ENCODE measurements at regions of chr11 and their contacts with region 1.

Region 1: DNA sequence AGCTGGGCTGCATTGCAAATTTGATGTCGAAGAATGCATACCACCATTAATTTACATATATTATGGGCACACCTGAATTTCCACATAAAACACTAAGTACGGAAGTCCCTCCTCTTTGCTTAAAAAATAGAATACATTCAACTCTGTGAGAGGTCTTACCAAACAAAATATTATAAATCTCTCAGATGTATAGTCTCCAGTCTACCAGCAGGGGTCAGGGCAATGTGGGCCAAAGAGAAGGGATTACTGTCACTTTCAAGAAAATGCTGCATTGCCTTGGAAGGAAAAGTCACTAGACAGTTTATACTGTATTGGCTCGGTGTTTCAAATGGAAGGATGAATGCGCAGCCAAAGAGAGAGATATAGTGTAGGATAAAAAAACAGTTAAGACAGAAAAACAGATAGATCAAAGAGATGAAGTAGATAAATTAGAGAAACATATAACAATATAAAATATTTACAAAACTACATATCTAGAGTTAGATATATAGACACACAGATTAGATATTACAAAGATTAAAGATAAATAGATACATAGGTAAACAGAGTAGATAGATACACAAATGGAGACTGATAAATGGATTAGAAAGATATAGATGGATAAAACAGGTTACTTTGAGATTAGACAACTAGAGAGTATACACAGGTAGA is 20.9 kb downstream of the SERGEF start:
- DNase-seq: peak; percentile 21 to 54
- H3K4me3 ChIP-seq: no peak overlapping the region
- H3K27ac ChIP-seq: no peak overlapping the region
- H3K4me1 ChIP-seq: no peaks in the 10 kb centered on the region
- H3K27me3 ChIP-seq: no peaks in the 10 kb centered on the region
- CTCF ChIP-seq: peak; percentile 95

Region 2: DNA sequence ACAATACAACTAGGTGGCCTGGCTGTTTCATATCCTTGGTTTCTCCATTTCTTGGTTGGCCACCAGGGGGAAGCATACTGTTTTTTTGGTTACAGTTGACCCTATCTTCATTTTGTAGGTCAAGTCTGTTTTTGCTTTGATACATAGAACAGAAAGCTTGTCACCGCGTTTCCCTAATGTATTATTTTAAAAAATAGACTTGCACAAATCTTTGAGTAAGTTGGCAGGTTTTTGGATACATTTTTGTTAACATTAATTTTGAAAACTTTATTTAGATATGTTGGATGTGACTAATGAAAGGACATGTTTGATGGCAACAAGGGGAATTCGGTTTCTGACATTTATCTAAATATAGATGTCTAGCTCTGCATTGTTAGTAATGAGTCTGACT is 637.3 kb before region 1 on chr11:
- CTCF ChIA-PET with region 1: no interaction called
- POLR2A ChIA-PET with region 1: interaction called, 15 read pairs
- intact Hi-C with region 1: no loop called
- DNase-seq: peak; percentile 53 to 74
- H3K4me3 ChIP-seq: peak overlapping the region; percentile 72; the same call in 1 of the 2 replicates
- H3K27ac ChIP-seq: no peak overlapping the region
- H3K4me1 ChIP-seq: 0 out of 2 replicates have a peak, but pooled peaks cover 4% of the 10 kb centered on the region
- H3K27me3 ChIP-seq: no peaks in the 10 kb centered on the region
- CTCF ChIP-seq: peak; percentile 74

Region 3: GRCh38 chr11:17906436-17906835 is 85.5 kb before region 1 on chr11:
- CTCF ChIA-PET with region 1: no interaction called
- POLR2A ChIA-PET with region 1: no interaction called
- intact Hi-C with region 1: no loop called
- DNase-seq: peak in 1 of 2 experiments; percentile 10
- H3K4me3 ChIP-seq: no peak overlapping the region
- H3K27ac ChIP-seq: no peak overlapping the region
- H3K4me1 ChIP-seq: no peaks in the 10 kb centered on the region
- H3K27me3 ChIP-seq: no peaks in the 10 kb centered on the region
- CTCF ChIP-seq: peak; percentile 38; the same call in 1 of the 2 replicates

Region 4: DNA sequence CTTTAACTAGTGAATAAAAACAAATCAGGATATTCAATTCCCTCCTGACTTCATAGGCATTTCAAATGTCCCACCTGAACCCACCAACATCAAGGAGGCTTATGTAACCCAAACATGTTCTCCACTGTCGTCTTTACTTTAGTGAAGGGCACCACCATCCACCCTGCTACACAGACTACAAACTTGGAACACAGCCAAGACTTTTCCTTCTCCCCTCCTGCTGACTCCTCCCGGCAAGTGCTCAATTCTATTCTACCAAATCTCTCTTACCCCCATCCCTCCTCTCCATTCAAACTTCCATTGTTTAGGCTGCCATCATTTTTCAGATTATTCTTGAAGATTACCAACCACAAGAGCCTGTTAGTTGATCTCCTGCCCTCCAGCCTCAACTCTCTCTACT is 89.6 kb after region 1 on chr11:
- CTCF ChIA-PET with region 1: no interaction called
- POLR2A ChIA-PET with region 1: no interaction called
- intact Hi-C with region 1: no loop called
- DNase-seq: no peak
- H3K4me3 ChIP-seq: no peak overlapping the region
- H3K27ac ChIP-seq: no peak overlapping the region
- H3K4me1 ChIP-seq: no peaks in the 10 kb centered on the region
- H3K27me3 ChIP-seq: no peaks in the 10 kb centered on the region
- CTCF ChIP-seq: no peak

Measured in PC-9 (cell line).